ENCODE measurements at regions of chr12 and their contacts with region 1.

Region 1: DNA sequence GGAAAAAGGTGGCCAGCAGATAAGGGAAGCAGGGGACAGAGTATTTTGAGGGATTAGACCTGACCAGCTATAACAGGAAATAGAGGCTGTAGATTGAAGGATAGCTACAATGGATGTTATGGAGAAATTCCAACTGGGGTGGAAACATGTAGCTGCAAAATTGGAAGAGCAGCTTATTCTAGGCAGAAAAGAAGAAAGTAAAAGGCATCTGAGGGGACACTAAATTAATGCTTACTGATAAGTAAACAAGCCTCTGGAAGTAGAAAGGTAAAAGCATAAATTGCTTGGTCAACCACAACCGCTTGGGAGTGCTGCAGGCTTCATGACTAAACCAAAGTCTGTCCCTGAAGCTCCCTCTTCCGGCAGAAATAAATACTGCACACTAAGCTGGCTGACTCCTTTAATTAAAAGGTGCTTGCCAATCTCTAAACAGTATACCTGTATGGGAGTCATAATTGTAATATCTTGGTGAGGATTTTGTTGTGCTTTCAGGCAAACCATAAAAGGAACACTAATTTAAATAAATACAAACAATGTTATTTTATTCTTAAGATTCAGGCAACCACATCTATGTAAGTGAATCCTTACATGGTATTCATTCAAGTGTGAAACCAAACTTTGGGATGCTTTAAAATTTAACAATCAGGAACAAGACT is 7.7 kb downstream of the UBC start:
- DNase-seq: peak; percentile 93
- H3K4me3 ChIP-seq: no peak overlapping the region
- H3K4me3 Mint-ChIP-seq: no peak overlapping the region
- H3K27ac Mint-ChIP-seq: no peak overlapping the region
- H3K4me1 ChIP-seq: peaks cover 27% of the 10 kb centered on the region
- H3K4me1 Mint-ChIP-seq: peaks cover 38% of the 10 kb centered on the region
- H3K27me3 ChIP-seq: no peaks in the 10 kb centered on the region
- H3K27me3 Mint-ChIP-seq: no peaks in the 10 kb centered on the region
- CTCF ChIP-seq: peak; percentile 98

Region 2: DNA sequence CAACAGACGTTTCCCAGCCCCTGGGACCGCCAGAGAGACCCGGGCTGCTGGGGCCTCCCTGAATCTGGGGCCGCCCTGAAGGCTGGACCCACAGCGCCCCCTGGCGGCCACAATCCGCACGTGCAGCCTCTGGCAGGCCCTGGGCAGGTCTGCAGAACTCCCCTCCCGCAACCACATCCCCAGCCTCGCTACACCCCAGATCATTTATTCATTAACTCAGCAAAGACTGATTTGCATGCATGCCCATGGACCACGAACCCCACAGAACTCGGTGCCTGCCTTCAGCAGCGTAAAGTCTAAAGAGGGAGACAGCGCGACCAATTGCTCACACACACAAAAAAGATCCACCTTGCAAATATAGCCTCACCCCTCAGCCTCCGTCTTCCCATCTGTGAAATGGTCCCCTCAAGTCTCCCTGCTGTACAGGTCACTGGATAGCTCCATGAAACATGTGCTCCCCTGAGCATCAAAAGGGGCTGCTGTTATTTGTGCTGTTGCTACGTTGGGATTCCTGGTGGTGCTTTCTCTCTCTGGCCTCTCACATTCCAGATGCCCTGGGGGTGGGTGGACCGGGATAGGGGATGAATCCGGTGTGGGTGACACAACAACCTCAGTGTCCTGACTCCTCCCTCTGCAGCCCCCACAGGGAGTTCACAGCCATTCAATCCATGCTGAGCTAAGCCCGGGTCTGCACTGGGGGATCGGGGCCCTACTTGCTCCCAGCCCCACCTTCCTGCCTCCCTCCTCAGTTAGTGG is 139.5 kb before region 1 on chr12:
- CTCF ChIA-PET with region 1: interaction called, 3 read pairs
- POLR2A ChIA-PET with region 1: no interaction called
- intact Hi-C with region 1: loop called (anchors 2 kb)
- DNase-seq: peak; percentile 74 to 88
- H3K4me3 ChIP-seq: no peak overlapping the region
- H3K4me3 Mint-ChIP-seq: no peak overlapping the region
- H3K27ac Mint-ChIP-seq: no peak overlapping the region
- H3K4me1 ChIP-seq: peaks cover 19% of the 10 kb centered on the region; the same call in 1 of the 2 replicates
- H3K4me1 Mint-ChIP-seq: peaks cover 36% of the 10 kb centered on the region
- H3K27me3 ChIP-seq: no peaks in the 10 kb centered on the region
- H3K27me3 Mint-ChIP-seq: no peaks in the 10 kb centered on the region
- CTCF ChIP-seq: peak; percentile 93 to 99

Region 3: DNA sequence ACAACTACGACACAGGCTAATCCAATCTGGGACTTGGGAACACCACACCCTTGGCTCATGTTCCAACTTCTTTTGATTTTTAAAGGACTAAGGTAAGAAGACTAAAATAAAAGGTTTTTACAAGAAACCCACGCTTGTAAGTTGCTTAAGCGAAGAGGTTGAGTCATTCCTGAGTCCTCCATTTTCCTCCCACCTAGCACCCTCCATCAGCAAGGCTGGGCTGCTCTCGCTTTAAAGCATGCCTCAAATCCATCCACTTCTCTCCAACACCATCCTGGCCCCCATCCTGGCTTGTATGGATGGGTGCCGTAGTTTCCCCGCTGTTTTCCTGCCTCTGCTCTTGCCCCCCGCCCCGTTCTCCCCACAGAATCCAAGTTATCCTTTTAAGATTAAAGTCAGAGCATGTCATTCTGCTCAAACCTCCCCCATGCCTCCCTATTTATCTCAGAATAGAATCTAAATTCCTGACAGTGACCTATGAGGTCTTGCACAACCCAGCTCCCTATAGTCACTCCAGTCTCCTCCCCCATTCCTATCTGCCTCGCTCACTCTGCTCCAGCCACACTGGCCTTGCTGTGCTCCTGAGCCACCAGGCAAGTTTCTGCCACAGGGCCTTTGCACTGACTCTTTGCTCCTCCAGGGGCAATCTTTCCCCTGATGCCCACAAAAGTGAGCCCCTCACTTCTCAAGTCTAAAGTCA is 77.6 kb before region 1 on chr12:
- CTCF ChIA-PET with region 1: interaction called, 18 read pairs
- POLR2A ChIA-PET with region 1: interaction called, 4 read pairs
- intact Hi-C with region 1: loop called (anchors 1 kb)
- DNase-seq: peak; percentile 86 to 93
- H3K4me3 ChIP-seq: no peak overlapping the region
- H3K4me3 Mint-ChIP-seq: peak overlapping the region; percentile 64
- H3K27ac Mint-ChIP-seq: peak overlapping the region; percentile 91
- H3K4me1 ChIP-seq: peaks cover 58% of the 10 kb centered on the region
- H3K4me1 Mint-ChIP-seq: peaks cover 41% of the 10 kb centered on the region
- H3K27me3 ChIP-seq: no peaks in the 10 kb centered on the region
- H3K27me3 Mint-ChIP-seq: no peaks in the 10 kb centered on the region
- CTCF ChIP-seq: no peak

Region 4: GRCh38 chr12:124863416-124864325 is 43.1 kb before region 1 on chr12 and contains the start of gene SCARB1:
- CTCF ChIA-PET with region 1: interaction called, 9 read pairs
- POLR2A ChIA-PET with region 1: interaction called, 4 read pairs
- intact Hi-C with region 1: loop called (anchors 1 kb)
- DNase-seq: peak; percentile 86 to 92
- H3K4me3 ChIP-seq: peak within 1 kb of the TSS; percentile 94
- H3K4me3 Mint-ChIP-seq: peak within 1 kb of the TSS; percentile 95
- H3K27ac Mint-ChIP-seq: peak within 1 kb of the TSS; percentile 89
- H3K4me1 ChIP-seq: peaks cover 17% of the 10 kb centered on the region
- H3K4me1 Mint-ChIP-seq: peaks cover 38% of the 10 kb centered on the region
- H3K27me3 ChIP-seq: no peaks in the 10 kb centered on the region
- H3K27me3 Mint-ChIP-seq: no peaks in the 10 kb centered on the region
- CTCF ChIP-seq: peak; percentile 15 to 36
- total RNA-seq, gene SCARB1: 104 and 106 TPM in 2 replicates

Region 5: GRCh38 chr12:124884587-124885438 is 21.9 kb before region 1 on chr12:
- CTCF ChIA-PET with region 1: interaction called, 17 read pairs
- POLR2A ChIA-PET with region 1: interaction called, 4 read pairs
- intact Hi-C with region 1: loop called (anchors 1 kb)
- DNase-seq: peak; percentile 89 to 93
- H3K4me3 ChIP-seq: no peak overlapping the region
- H3K4me3 Mint-ChIP-seq: peak overlapping the region; percentile 71
- H3K27ac Mint-ChIP-seq: peak overlapping the region; percentile 97
- H3K4me1 ChIP-seq: peaks cover 47% of the 10 kb centered on the region
- H3K4me1 Mint-ChIP-seq: peaks cover 9% of the 10 kb centered on the region
- H3K27me3 ChIP-seq: no peaks in the 10 kb centered on the region
- H3K27me3 Mint-ChIP-seq: no peaks in the 10 kb centered on the region
- CTCF ChIP-seq: peak in 1 of 2 experiments; percentile 4

Region 6: DNA sequence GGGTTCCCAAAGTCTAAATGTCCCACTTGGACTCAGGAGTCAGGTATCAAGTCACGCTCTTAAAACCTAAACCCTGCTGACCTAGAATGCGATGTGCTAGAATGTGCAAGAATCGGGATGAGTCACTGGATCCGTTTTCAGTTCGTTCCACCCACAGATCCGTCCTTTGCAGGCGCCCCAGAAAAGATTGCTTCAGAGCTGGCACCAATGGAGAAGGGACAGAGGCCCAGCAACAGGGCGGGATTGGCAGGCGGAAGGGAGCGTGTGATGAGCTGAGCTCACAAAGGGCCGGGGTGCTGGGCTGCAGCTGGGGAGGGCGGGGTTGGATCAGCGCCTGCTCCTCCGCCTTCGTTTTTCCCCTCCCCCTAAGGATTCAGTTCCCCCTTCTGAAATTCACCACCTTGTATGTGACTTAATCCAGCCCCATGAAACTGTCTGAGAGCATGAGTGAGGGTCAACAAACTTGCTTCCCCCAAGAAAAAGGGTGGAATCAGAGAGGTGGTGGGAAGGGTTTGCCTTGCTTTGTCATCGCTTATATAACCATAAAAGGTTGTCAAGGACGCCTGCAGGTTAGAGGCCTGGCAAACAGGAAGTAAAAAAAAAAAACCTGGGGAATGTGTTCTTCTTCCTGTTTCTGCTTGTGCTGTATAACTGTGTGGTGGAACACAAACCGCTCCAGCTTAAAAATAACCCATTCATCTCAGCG is 10.6 kb after region 1 on chr12:
- CTCF ChIA-PET with region 1: interaction called, 19 read pairs
- POLR2A ChIA-PET with region 1: interaction called, 16 read pairs
- intact Hi-C with region 1: no loop called
- DNase-seq: peak; percentile 97 to 99
- H3K4me3 ChIP-seq: peak overlapping the region; percentile 31
- H3K4me3 Mint-ChIP-seq: peak overlapping the region; percentile 98
- H3K27ac Mint-ChIP-seq: peak overlapping the region; percentile 100
- H3K4me1 ChIP-seq: peaks cover 42% of the 10 kb centered on the region
- H3K4me1 Mint-ChIP-seq: peaks cover 49% of the 10 kb centered on the region
- H3K27me3 ChIP-seq: no peaks in the 10 kb centered on the region
- H3K27me3 Mint-ChIP-seq: peaks cover 9% of the 10 kb centered on the region
- CTCF ChIP-seq: no peak

Region 7: GRCh38 chr12:124940549-124941527 is 34.1 kb after region 1 on chr12:
- CTCF ChIA-PET with region 1: interaction called, 43 read pairs
- POLR2A ChIA-PET with region 1: interaction called, 3 read pairs
- intact Hi-C with region 1: loop called (anchors 1 kb)
- DNase-seq: peak; percentile 94 to 96
- H3K4me3 ChIP-seq: peak overlapping the region; percentile 52
- H3K4me3 Mint-ChIP-seq: no peak overlapping the region
- H3K27ac Mint-ChIP-seq: no peak overlapping the region
- H3K4me1 ChIP-seq: no peaks in the 10 kb centered on the region
- H3K4me1 Mint-ChIP-seq: no peaks in the 10 kb centered on the region
- H3K27me3 ChIP-seq: no peaks in the 10 kb centered on the region
- H3K27me3 Mint-ChIP-seq: no peaks in the 10 kb centered on the region
- CTCF ChIP-seq: peak; percentile 83 to 92